Heart left ventricle (tissue), 16 donors: ENCODE measurements at regions of chr1 and their contacts with region 1.

Region 1: GRCh38 chr1:51569284-51570062 is 47.4 kb upstream of the OSBPL9 start:
- DNase-seq: no peak
- ATAC-seq: peak in 3 of 4 donors; percentile 17 to 51 (median 37)
- H3K4me3 ChIP-seq: no peak overlapping the region
- H3K27ac ChIP-seq: peak overlapping the region in 1 of 12 donors; percentile 53
- H3K4me1 ChIP-seq: peaks cover 5 to 44% (median 19%) of the 10 kb centered on the region in 12 donors
- H3K27me3 ChIP-seq: no peaks in the 10 kb centered on the region
- CTCF ChIP-seq: peak in 5 of 12 donors; percentile 13 to 37 (median 25)
- POLR2A ChIP-seq: no peak

Region 2: DNA sequence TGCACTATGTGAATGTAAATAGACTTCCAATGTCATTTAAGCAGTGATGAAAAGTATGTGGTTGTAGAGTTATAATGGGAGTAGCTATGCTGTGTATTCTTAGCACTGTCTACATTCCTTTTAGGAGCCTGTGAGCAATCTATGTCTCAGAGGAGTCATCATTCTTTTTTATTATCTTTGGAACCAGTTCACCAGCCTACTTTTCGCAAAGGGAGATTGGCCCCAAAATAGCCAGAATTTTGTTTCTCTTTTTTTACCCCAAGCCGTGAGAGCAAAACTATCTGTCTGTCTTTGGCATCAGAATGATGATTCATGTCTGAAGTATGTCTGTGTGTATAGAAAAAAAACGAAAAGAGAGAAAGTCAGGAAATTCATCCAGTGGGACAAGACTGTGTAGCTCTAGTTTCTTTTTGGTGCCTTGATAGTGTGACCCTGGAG is 91.6 kb after region 1 on chr1:
- intact Hi-C with region 1: loop called in 1 of 10 experiments (anchors 10 kb)
- DNase-seq: no peak
- ATAC-seq: peak; percentile 79 to 90 (median 84)
- H3K4me3 ChIP-seq: no peak overlapping the region
- H3K27ac ChIP-seq: peak overlapping the region; percentile 7 to 77 (median 54)
- H3K4me1 ChIP-seq: peaks cover 0 to 73% (median 42%) of the 10 kb centered on the region in 12 donors
- H3K27me3 ChIP-seq: no peaks in the 10 kb centered on the region
- CTCF ChIP-seq: no peak
- POLR2A ChIP-seq: no peak

Region 3: GRCh38 chr1:51897699-51898031 is 328.2 kb after region 1 on chr1:
- intact Hi-C with region 1: no loop called
- DNase-seq: no peak
- ATAC-seq: no peak
- H3K4me3 ChIP-seq: no peak overlapping the region
- H3K27ac ChIP-seq: no peak overlapping the region
- H3K4me1 ChIP-seq: no peaks in the 10 kb centered on the region
- H3K27me3 ChIP-seq: peaks cover 0 to 73% (median 18%) of the 10 kb centered on the region in 9 donors
- CTCF ChIP-seq: no peak
- POLR2A ChIP-seq: no peak